ENCODE measurements at regions of chrX and their contacts with region 1.

Region 1: GRCh38 chrX:109384699-109385098 is 97.2 kb downstream of the GUCY2F start:
- DNase-seq: peak; percentile 54
- H3K4me3 Mint-ChIP-seq: no peak overlapping the region
- H3K27ac Mint-ChIP-seq: no peak overlapping the region
- H3K4me1 Mint-ChIP-seq: no peaks in the 10 kb centered on the region
- H3K27me3 Mint-ChIP-seq: peaks cover 35% of the 10 kb centered on the region
- CTCF ChIP-seq: peak; percentile 47

Region 2: DNA sequence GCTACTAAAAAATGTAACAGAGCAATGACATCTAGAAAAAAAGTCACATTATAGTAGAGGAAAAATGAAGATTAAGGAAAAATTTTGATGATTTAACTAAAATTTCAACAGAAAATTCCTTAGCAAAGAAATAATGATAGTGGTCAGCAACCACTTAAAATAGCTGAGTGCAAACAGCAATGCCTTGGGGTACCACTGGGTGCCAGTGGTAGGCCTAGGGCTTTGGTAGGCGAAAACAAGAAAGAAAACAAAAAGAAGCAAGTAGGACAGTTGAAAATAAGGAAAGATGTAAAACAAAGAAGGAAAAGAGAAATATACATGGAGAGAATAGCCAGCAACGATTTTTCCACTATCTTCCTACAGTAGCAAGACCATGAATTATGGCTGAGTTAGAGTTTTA is 334.8 kb before region 1 on chrX:
- CTCF ChIA-PET with region 1: interaction called, 9 read pairs
- POLR2A ChIA-PET with region 1: no interaction called
- intact Hi-C with region 1: loop called (anchors 2 kb)
- DNase-seq: peak; percentile 9
- H3K4me3 Mint-ChIP-seq: no peak overlapping the region
- H3K27ac Mint-ChIP-seq: no peak overlapping the region
- H3K4me1 Mint-ChIP-seq: no peaks in the 10 kb centered on the region
- H3K27me3 Mint-ChIP-seq: peaks cover 38% of the 10 kb centered on the region
- CTCF ChIP-seq: peak; percentile 14

Measured in MCF 10A (cell line).